CD4-positive, alpha-beta T cell (primary cell): ENCODE measurements at regions of chr9 and their contacts with region 1.

Region 1: GRCh38 chr9:131270171-131271015 is 5.9 kb downstream of the FAM78A start:
- DNase-seq: peak in 9 of 14 experiments; percentile 44 to 80 (median 59)
- ATAC-seq: peak; percentile 11
- H3K4me3 ChIP-seq: peak overlapping the region; percentile 99
- H3K4me3 Mint-ChIP-seq: peak overlapping the region; percentile 97
- H3K27ac ChIP-seq: peak overlapping the region; percentile 83 to 94
- H3K27ac Mint-ChIP-seq: peak overlapping the region; percentile 100
- H3K4me1 ChIP-seq: peaks cover 74% of the 10 kb centered on the region
- H3K4me1 Mint-ChIP-seq: peaks cover 60% of the 10 kb centered on the region
- H3K27me3 ChIP-seq: no peaks in the 10 kb centered on the region
- H3K27me3 Mint-ChIP-seq: no peaks in the 10 kb centered on the region
- CTCF ChIP-seq: no peak

Region 2: DNA sequence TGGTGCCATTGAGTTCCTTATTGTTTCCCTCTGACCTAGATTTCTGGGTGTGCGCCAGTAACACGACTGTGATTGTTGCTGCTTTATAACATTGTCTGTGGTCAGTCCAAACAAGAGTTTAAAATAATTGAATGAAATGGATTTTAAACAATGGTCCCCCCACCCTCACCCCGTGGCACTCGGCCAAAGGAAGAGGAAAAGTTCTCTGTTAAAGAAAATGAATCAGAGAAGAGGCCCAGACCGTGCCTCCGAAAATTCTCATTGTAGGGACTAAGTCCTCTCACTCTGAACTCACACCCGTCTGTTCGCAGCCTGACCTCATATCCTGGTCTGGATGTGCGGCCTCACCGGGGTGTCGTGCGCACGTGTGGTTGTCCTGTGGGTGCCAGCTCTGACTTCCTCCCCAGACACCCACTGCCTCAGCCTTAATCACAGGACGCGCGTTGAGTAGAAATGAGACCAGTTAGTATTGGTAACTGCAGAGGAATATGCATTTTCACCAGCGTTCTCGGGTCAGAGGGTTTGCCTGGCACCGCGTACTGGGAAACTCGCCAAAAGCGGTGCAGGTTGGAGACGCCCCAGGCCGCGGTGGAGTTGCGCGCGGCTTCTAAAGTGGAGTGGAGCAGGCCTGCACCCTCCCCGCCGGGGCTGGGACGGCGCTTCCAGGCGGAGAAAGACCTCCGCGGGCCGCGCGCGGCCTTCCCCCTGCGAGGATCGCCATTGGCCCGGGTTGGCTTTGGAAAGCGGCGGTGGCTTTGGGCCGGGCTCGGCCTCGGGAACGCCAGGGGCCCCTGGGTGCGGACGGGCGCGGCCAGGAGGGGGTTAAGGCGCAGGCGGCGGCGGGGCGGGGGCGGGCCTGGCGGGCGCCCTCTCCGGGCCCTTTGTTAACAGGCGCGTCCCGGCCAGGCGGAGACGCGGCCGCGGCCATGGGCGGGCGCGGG is 435.8 kb before region 1 on chr9 and contains the start of gene ABL1:
- CTCF ChIA-PET with region 1: no interaction called
- POLR2A ChIA-PET with region 1: no interaction called
- intact Hi-C with region 1: no loop called
- DNase-seq: peak; percentile 11 to 84 (median 47)
- ATAC-seq: peak; percentile 85
- H3K4me3 ChIP-seq: peak within 1 kb of the TSS; percentile 63
- H3K4me3 Mint-ChIP-seq: peak within 1 kb of the TSS; percentile 95
- H3K27ac ChIP-seq: no peak within 1 kb of the TSS
- H3K27ac Mint-ChIP-seq: peak within 1 kb of the TSS; percentile 93
- H3K4me1 ChIP-seq: peaks cover 23% of the 10 kb centered on the region
- H3K4me1 Mint-ChIP-seq: peaks cover 62% of the 10 kb centered on the region
- H3K27me3 ChIP-seq: no peaks in the 10 kb centered on the region
- H3K27me3 Mint-ChIP-seq: no peaks in the 10 kb centered on the region
- CTCF ChIP-seq: no peak
- total RNA-seq, gene ABL1: 29.8 to 33.7 TPM

Region 3: GRCh38 chr9:131237931-131238401 is 32.4 kb before region 1 on chr9:
- CTCF ChIA-PET with region 1: interaction called, 3 read pairs
- POLR2A ChIA-PET with region 1: interaction called, 132 read pairs
- intact Hi-C with region 1: loop called (anchors 2 kb)
- DNase-seq: peak; percentile 74 to 93 (median 82)
- ATAC-seq: peak; percentile 92
- H3K4me3 ChIP-seq: peak overlapping the region; percentile 43
- H3K4me3 Mint-ChIP-seq: peak overlapping the region; percentile 84
- H3K27ac ChIP-seq: peak overlapping the region; percentile 52 to 79
- H3K27ac Mint-ChIP-seq: peak overlapping the region; percentile 95
- H3K4me1 ChIP-seq: peaks cover 76% of the 10 kb centered on the region
- H3K4me1 Mint-ChIP-seq: peaks cover 52% of the 10 kb centered on the region
- H3K27me3 ChIP-seq: no peaks in the 10 kb centered on the region
- H3K27me3 Mint-ChIP-seq: no peaks in the 10 kb centered on the region
- CTCF ChIP-seq: no peak